GM10248 (cell line): ENCODE measurements at regions of chr5 and their contacts with region 1.

Region 1: DNA sequence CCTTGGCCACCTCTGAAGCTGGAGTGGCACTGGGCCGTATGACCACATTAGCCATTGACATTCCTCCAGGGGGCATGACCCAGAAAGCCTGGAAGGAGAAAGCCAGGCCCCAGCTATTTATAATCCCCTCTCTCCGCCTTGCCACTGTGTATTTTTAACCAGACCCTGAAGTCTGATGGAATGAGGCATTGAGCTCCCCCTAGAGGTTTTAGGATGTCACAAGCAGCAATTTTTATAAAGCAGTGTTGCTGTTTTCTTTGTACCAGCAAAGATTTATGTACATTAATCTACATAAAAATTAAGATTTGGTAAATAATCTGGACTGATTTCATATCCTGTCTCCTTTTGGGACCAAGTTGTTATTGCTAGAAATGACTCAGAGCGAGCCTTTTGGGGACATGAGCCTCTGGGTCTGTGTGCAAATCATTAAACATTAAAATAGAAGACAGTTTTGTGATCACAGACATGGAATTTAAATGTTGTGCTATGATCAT is 127.1 kb downstream of the TRIO start:
- DNase-seq: peak; percentile 68
- CTCF ChIP-seq: peak; percentile 67

Region 2: DNA sequence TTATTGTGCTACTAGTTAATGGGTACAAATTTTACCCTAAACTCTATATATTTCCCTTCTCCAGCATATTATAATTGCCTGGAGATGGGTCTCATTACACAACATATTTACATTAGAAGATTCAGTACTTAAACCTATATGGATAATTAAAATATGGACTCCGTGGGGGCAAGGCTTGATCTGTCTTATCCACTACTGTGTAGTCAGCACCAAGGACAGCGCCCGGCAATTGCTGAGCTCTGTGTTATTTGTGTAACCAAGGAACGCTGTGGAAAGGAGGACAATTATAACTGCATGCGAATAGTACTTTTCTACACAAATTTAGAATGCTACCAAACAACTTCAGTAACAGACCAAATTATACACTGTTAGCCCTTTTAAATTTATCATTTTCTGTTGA is 403.5 kb before region 1 on chr5:
- CTCF ChIA-PET with region 1: no interaction called
- POLR2A ChIA-PET with region 1: no interaction called
- DNase-seq: no peak
- CTCF ChIP-seq: no peak

Region 3: DNA sequence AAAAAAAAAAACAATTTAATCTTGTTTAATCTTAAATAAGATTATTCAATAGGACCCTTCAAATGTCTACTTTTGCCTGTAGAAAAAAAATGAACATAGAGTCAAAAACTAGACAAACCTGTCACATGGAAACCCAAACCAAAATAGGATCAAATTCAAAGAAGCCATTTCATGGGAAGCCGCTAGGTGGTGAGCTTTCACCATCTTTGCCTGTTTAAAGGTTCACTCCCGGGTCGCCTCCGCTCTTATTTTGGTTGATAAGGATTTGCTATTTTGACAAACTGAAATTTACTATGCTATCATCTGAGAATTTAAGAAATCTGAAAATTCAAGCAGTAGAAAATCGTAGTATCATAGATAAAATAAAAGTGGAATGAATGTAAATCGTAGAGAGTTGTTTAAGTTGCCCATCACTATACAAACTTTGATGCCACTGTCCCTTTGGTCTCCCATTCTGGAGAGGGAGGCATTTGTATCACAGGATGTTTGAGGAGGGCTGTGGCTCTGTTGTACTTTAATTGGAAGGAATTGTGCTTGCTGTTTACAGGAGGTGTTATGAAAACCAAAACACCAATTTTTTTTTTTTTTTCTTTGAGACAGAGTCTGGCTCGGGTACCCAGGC is 282.3 kb before region 1 on chr5:
- CTCF ChIA-PET with region 1: interaction called, 23 read pairs
- POLR2A ChIA-PET with region 1: no interaction called
- DNase-seq: peak; percentile 66
- CTCF ChIP-seq: peak; percentile 69

Region 4: GRCh38 chr5:14156650-14157493 is 113.4 kb before region 1 on chr5:
- CTCF ChIA-PET with region 1: interaction called, 14 read pairs
- POLR2A ChIA-PET with region 1: no interaction called
- DNase-seq: peak; percentile 64
- CTCF ChIP-seq: no peak

Region 5: GRCh38 chr5:14234219-14234618 is 36.0 kb before region 1 on chr5:
- CTCF ChIA-PET with region 1: interaction called, 13 read pairs
- POLR2A ChIA-PET with region 1: no interaction called
- DNase-seq: no peak
- CTCF ChIP-seq: no peak

Region 6: GRCh38 chr5:14258840-14259239 is 11.4 kb before region 1 on chr5:
- CTCF ChIA-PET with region 1: interaction called, 53 read pairs
- POLR2A ChIA-PET with region 1: no interaction called
- DNase-seq: peak; percentile 50
- CTCF ChIP-seq: no peak

Region 7: DNA sequence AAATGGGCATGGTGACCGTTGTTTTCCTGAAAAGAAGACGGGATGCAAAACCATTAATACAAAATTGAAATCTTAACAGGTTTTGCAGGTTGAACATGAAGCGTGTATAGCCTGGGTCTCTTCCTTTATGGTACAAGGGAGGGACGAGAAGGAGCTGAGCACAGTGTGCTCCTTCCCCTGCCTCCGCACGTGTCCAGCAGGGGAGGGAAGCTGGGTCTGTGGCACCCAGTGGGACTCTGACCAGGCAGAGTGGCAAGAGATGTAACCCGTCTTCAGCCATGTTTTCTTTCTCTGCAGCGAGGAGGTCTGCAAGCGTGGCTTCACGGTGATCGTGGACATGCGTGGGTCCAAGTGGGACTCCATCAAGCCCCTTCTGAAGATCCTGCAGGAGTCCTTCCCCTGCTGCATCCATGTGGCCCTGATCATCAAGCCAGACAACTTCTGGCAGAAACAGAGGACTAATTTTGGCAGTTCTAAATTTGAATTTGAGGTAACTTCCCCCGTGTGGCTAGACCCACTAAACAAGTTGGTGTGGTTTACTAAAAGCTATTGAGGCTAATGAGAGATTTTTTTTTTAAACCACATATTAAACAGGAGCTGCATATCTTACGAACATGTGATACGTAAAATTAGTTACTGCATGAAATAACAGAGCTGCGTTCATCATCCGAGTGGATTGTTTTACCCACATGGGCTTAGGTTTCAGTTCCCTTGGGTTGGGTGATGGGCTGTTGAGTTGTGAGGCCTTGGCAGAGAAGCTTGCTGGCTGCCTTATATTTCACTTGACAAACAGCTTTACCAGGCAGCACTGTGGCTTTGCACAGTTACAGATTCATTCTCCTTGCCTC is 16.5 kb after region 1 on chr5:
- CTCF ChIA-PET with region 1: interaction called, 42 read pairs
- POLR2A ChIA-PET with region 1: no interaction called
- DNase-seq: peak; percentile 44
- CTCF ChIP-seq: no peak

Region 8: GRCh38 chr5:14379739-14380497 is 109.7 kb after region 1 on chr5:
- CTCF ChIA-PET with region 1: no interaction called
- POLR2A ChIA-PET with region 1: no interaction called
- DNase-seq: no peak
- CTCF ChIP-seq: no peak